A549 (cell line): ENCODE measurements at regions of chr17 and their contacts with region 1.

Region 1: DNA sequence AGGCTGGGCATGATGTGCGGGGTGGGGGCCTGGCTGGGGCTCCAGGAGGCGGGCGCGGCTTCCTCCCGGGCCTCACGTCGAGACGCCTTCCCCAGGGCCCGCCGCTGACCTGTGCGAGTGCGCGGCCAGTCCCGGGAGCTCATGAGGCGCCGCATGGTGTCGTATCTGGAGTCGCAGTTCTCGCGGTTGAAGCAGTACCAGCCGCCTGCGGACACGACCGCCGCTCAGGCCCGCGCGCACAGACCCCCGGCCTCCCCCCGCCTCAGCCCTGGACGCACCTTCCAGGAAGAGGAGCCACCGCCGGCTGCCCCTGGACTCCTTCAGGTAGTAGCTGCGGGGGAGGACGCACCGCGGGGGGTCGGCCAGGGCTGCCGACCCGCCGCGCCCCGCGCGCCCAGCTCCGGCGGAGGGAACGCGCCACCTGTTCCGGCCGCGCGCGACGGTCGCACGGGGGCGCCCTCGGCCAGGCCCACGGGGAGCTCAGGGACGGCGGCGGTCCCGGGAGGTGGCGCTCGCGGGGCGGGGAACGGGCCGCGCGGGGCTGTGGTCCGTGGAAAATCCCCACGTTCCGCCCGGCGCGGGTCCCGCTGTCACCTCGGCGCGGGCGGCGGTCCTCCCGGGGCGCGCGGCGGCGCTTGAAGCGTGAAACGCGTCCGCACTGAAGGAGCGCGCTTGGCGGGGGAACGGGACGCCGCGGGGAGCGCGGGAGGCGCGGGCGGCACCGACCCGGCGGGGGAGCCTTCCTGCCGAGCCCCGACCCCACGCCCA is 1.4 kb downstream of the NOTUM start:
- DNase-seq: peak; percentile 55 to 65
- ATAC-seq: peak; percentile 54 to 77
- H3K4me3 ChIP-seq: peak overlapping the region; percentile 52
- H3K27ac ChIP-seq: peak overlapping the region; percentile 60 to 89
- H3K4me1 ChIP-seq: peaks cover 19% of the 10 kb centered on the region; the same call in 1 of the 3 replicates
- CTCF ChIP-seq: peak; percentile 100
- EP300 ChIP-seq: no peak
- POLR2A ChIP-seq: no peak
- RAD21 ChIP-seq: peak; percentile 85 to 100

Region 2: DNA sequence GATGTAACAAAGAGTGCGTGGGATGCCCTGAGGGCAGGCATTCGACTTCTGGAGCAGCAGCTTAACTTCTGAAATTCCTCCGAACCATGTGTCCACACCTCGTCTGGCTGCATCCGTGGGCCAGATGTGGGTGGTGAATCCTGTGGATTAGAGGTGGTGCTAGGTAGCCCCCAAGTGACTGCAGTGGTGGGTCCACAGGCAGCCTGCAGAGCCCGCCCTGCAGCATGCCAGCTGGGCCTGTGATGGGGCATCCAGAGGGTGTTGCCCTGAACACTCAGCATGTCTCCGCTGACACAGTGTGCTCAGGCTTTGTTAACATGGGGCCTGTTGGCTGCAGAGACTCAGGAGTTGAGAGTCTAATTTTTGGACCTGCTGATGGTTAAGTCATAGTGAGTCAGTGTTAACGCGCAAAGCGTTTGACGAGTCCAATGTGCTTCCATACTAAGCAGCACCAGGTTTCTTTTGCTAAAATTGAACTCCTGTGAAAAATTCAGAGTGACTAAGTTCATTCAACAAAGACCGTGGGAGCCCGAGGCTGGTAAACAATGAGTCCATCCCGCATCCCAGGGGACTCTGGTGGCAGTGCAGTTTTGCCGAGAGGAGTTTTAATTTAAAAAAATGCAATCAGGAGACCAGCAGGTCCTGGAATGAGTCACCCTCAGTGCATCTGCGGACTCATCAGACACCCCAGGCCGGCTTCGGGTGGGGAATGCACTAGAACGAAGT is 61.2 kb before region 1 on chr17:
- CTCF ChIA-PET with region 1: interaction called, 10 read pairs
- POLR2A ChIA-PET with region 1: no interaction called
- DNase-seq: peak; percentile 69 to 87
- ATAC-seq: peak; percentile 82 to 84
- H3K4me3 ChIP-seq: no peak overlapping the region
- H3K27ac ChIP-seq: peak overlapping the region; percentile 75 to 88
- H3K4me1 ChIP-seq: peaks cover 34% of the 10 kb centered on the region
- CTCF ChIP-seq: no peak
- EP300 ChIP-seq: no peak
- POLR2A ChIP-seq: no peak
- RAD21 ChIP-seq: 0 out of 5 replicates have a peak, but pooled peaks of 1 of the 2 experiments have one; percentile 13

Region 3: DNA sequence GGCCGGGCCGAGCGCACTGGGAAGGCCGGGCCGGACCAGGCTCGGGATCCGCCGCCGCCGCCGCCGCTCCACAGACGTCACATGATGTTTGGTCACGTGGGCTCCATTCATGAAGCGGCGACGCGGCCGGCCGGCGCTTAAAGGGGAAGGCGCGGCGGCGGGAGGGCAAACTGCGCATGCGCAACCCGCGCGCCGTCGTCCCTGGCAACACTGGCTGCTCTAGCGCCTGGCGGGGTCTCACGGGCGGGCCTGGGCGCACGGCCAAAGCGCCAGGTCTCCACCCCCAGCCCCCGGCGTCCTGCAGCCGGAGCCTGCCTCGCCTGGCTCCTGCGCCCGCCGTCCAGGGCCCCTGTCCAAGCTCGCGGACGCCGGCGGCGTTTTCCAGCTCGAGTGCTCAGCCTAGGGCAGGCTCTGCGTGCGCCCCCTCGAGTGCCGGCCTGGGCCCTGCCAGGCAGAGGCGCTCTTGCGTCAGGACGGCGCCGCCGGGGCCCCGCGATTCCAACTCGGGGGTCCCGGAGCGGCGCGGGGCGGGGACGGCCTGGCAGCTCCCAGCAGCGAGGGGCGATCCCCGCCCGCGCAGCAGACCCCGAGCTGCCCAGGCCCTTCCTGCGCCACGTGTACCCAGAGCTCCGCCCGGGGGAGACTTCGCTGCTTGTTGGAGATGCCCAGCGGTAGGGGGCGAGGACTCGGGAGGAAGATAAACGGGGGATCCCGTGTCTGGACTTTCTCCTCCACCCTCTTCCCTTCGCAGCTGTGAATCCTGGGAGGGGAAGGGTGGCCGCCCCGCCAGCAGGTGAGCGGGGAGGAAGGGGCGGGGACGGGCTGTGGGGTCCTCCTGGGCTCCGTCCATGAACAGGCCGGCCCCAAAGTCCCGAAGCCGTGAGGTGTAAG is 31.6 kb before region 1 on chr17 and contains the start of gene MAFG:
- CTCF ChIA-PET with region 1: interaction called, 99 read pairs
- POLR2A ChIA-PET with region 1: no interaction called
- DNase-seq: peak; percentile 96 to 98
- ATAC-seq: peak; percentile 20 to 40
- H3K4me3 ChIP-seq: peak within 1 kb of the TSS; percentile 90
- H3K27ac ChIP-seq: peak within 1 kb of the TSS; percentile 96 to 98
- H3K4me1 ChIP-seq: peaks cover 36% of the 10 kb centered on the region
- CTCF ChIP-seq: peak; percentile 74
- EP300 ChIP-seq: no peak
- POLR2A ChIP-seq: peak; percentile 33
- RAD21 ChIP-seq: peak in 1 of 2 experiments; percentile 54; a peak in 3 of 5 replicates
- polyA plus RNA-seq, gene MAFG: 41.6 and 47.9 TPM in 2 replicates

Region 4: DNA sequence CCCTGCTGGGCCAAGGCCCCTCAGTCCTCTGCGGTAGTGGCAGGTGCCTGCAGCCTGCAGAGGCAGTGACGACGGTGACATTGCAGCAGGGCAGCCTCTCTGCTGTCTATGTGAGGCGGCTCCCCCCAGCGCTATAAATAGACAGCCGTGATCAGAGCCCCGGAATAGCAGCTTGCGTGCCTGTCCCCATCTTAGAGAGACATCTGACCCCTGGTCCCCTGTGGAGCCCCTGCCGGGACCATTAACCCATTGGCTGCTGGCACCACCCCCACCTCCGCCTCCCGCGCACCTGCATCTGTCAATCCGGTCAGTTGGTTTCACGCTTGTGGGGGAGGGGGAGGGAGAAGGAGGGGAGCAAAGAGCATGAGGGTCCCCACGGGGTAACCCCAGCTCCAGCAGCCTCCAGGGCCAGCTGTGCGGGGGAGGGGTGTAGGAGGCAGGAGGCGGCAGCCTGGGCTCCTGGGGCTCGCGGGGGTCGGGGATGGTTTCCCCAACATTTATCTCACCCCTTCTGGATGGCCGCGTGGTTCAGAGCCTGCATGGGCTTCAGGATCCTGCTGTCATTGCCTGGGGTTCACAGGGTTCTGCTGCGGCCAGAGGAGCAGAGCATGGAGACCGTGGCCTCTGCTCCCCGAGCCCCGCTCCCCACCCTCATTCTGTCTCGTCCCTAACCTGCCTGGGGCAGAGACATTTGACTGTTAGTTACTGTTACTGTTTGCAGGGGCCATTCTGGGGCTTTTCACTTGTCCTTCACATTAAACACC is 17.6 kb before region 1 on chr17:
- CTCF ChIA-PET with region 1: interaction called, 116 read pairs
- POLR2A ChIA-PET with region 1: no interaction called
- DNase-seq: no peak
- ATAC-seq: no peak
- H3K4me3 ChIP-seq: no peak overlapping the region
- H3K27ac ChIP-seq: no peak overlapping the region
- H3K4me1 ChIP-seq: peaks cover 4% of the 10 kb centered on the region; the same call in 2 of the 3 replicates
- CTCF ChIP-seq: no peak
- EP300 ChIP-seq: no peak
- POLR2A ChIP-seq: no peak
- RAD21 ChIP-seq: no peak

Region 5: GRCh38 chr17:81977211-81978027 is 17.9 kb after region 1 on chr17 and contains the start of gene ASPSCR1:
- CTCF ChIA-PET with region 1: interaction called, 44 read pairs
- POLR2A ChIA-PET with region 1: interaction called, 4 read pairs
- DNase-seq: peak; percentile 74 to 95
- ATAC-seq: peak; percentile 88 to 89
- H3K4me3 ChIP-seq: peak within 1 kb of the TSS; percentile 89
- H3K27ac ChIP-seq: peak within 1 kb of the TSS; percentile 89 to 94
- H3K4me1 ChIP-seq: peaks cover 12% of the 10 kb centered on the region
- CTCF ChIP-seq: no peak
- EP300 ChIP-seq: no peak
- POLR2A ChIP-seq: peak; percentile 77
- RAD21 ChIP-seq: no peak
- polyA plus RNA-seq, gene ASPSCR1: 10.3 and 12.3 TPM in 2 replicates

Region 6: GRCh38 chr17:81991684-81992305 is 32.2 kb after region 1 on chr17:
- CTCF ChIA-PET with region 1: interaction called, 46 read pairs
- POLR2A ChIA-PET with region 1: no interaction called
- DNase-seq: peak in 1 of 2 experiments; percentile 50
- ATAC-seq: peak; percentile 38 to 61
- H3K4me3 ChIP-seq: no peak overlapping the region
- H3K27ac ChIP-seq: peak overlapping the region in 1 of 2 experiments; percentile 61; a peak in 4 of 6 replicates
- H3K4me1 ChIP-seq: peaks cover 17% of the 10 kb centered on the region
- CTCF ChIP-seq: no peak
- EP300 ChIP-seq: no peak
- POLR2A ChIP-seq: no peak
- RAD21 ChIP-seq: no peak

Region 7: DNA sequence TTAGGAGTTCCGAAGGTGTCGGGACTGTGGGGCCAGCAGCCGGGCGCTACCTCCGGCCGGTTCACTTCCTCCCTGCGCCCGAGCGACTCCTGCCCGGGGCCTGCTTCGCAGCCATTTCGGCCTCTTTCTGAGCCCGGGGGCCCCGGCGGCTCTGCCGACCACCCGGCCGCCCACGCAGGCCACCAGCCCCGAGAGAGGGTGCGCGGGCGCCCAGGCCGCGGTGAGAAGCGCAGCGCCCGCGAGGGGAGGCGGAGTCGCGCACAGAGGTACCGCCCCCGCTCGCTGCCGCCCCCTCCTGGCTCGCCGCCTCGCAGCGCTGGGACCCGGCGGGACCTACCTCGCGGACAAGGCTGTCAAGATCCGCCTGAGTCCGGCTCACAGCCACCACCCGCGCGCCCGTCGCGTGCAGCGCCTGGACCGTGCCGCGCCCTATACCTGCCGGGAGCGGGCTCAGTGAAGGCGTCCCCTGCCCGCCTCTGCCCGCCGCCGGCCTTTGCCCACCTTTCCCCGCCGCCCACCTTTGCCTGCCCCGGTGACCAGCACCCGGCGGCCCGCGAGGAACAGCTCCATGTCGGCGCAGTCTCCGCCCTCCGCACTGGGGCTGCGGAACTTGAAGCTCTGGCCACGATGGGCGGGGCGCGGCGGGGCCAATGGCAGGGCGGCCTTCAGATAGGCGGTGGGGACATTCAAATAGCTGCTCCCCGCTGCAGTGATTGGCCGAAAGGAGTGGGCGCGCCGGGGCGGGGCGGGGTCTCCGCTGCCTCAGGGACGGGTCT is 77.8 kb after region 1 on chr17 and contains the start of gene DCXR:
- CTCF ChIA-PET with region 1: interaction called, 794 read pairs
- POLR2A ChIA-PET with region 1: interaction called, 3 read pairs
- DNase-seq: peak; percentile 99
- ATAC-seq: peak; percentile 89 to 96
- H3K4me3 ChIP-seq: peak within 1 kb of the TSS; percentile 52
- H3K27ac ChIP-seq: peak within 1 kb of the TSS; percentile 72 to 89
- H3K4me1 ChIP-seq: peaks cover 9% of the 10 kb centered on the region; the same call in 2 of the 3 replicates
- CTCF ChIP-seq: peak; percentile 89
- EP300 ChIP-seq: peak in 1 of 2 experiments; percentile 18; a peak in 1 of 5 replicates
- POLR2A ChIP-seq: peak; percentile 84
- RAD21 ChIP-seq: peak in 1 of 2 experiments; percentile 47; a peak in 2 of 5 replicates
- polyA plus RNA-seq, gene DCXR: 39.3 and 48.3 TPM in 2 replicates